Activated CD4-positive, alpha-beta memory T cell treated with anti-CD3 and anti-CD28 coated beads for 36 hours (primary cell): ENCODE measurements at regions of chr6 and their contacts with region 1.

Region 1: DNA sequence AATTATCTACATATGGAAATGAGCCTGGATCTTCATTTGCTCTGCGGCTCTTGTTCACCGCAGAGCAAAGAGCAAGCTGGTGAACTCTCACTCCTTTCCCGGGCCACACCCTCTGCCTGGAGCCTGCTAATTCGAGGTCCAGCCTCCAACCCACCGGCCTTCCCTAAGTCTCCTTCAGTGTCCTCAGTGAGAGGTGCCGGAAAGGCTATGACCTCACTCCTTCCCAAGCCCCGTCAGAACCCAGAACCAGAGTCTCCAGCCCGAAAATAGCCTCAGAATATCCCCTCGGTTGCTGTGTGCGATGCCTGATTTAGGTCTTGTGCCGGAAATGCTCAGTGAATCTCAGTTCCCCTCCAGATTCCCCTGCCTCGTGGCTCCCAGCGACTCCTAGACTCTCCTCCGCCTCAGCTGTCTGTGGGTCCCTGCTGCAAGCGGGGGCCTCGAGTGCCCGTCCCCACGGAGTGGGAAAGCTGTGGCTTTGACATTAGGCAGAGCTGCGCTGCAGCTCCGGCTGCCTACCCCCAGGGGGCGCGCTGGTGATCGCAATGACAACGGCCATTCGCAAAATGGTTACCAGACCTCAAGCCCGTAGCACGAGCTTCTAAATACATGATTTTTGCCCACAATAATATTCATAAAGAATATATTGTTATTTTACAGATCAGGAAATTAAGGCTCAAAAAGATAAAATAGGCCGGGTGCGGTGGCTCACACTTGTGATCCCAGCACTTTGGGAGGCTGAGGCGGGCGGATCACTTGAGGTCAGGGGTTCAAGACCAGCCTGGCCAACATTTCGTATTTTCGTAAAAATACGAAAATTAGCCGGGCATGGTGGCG is 4.1 kb upstream of the BNIP5 start:
- DNase-seq: peak; percentile 80
- H3K4me3 Mint-ChIP-seq: no peak overlapping the region
- H3K27ac Mint-ChIP-seq: no peak overlapping the region
- H3K4me1 Mint-ChIP-seq: peaks cover 13% of the 10 kb centered on the region
- H3K27me3 Mint-ChIP-seq: peaks cover 11% of the 10 kb centered on the region

Region 2: DNA sequence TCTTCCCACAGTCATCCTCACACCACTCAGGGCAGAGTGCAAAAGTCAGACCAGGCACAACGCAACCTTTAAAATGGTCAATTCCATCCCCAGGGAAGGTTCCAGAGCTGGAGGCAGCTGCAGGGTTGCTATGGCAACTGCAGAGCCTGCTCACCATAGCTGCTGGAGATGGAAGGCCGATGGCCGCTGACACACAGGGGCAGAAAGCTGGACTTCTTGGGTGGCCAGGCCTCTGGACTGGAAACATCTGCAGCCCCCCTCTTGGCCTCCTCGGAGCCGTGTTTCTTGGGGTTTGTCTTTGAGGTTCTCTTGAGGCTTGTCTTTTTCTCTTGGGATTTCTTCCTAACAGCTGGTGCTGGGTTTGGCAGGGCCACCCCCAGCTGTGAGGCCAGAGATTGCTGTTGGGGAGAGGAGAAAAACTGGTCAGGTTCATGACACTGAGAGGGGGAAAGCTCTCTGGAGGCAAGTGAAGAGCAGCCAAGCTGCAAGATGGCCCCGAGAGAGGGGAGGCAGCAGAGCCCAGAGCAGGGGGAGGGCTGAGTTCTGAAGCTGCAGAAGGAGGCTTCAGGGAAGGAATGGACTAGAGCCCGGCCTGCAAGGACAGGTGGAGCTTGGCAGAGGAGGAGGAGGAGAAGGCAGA is 14.4 kb before region 1 on chr6:
- CTCF ChIA-PET with region 1: interaction called, 32 read pairs
- POLR2A ChIA-PET with region 1: no interaction called
- intact Hi-C with region 1: no loop called
- DNase-seq: no peak
- H3K4me3 Mint-ChIP-seq: no peak overlapping the region
- H3K27ac Mint-ChIP-seq: no peak overlapping the region
- H3K4me1 Mint-ChIP-seq: no peaks in the 10 kb centered on the region
- H3K27me3 Mint-ChIP-seq: no peaks in the 10 kb centered on the region

Region 3: DNA sequence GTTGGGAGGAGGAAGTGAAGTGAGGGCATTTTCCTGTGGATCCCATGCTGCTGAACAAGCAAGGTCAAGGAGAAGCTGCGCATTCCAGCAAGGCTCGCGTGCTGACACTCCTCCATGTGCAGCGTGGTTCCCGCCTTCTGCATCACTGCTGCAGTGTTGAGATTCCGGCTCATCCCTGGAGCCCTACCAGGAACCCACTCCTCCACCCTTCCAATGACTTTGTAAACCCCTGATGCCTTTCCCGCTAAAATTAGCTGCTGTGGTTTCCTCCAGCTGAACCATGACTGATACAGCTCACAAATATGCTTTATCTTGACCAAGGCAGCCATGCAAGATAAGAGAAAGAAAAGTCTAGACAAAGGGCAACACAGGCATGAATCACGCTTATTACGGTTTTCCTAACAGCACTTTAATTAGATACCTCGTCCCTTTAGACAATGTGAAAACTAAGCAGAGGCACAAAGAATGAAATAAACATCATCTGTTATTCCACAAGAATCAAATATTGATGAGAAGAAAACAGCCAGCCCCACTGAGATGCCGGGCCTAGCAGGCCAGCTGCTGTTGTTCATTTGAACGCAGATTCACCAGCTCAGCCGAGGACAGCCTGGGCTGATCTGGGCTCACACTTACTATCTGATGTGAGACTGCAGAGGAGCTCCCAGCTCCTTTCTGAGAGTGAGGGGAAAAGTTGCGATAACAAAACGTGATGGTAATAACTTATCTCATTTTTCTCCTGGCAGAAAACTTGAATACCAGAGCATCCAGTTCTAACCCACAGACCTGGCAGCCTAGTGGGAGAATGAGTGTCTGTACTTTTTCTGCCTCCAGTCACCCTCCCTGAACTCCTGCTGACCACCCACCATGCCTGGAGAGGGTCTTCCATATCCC is 10.1 kb after region 1 on chr6:
- CTCF ChIA-PET with region 1: interaction called, 74 read pairs
- POLR2A ChIA-PET with region 1: interaction called, 3 read pairs
- intact Hi-C with region 1: no loop called
- DNase-seq: no peak
- H3K4me3 Mint-ChIP-seq: no peak overlapping the region
- H3K27ac Mint-ChIP-seq: no peak overlapping the region
- H3K4me1 Mint-ChIP-seq: peaks cover 15% of the 10 kb centered on the region
- H3K27me3 Mint-ChIP-seq: peaks cover 13% of the 10 kb centered on the region

Region 4: GRCh38 chr6:36360241-36361054 is 19.6 kb after region 1 on chr6:
- CTCF ChIA-PET with region 1: interaction called, 103 read pairs
- POLR2A ChIA-PET with region 1: interaction called, 3 read pairs
- intact Hi-C with region 1: loop called (anchors 1 kb)
- DNase-seq: peak; percentile 79
- H3K4me3 Mint-ChIP-seq: no peak overlapping the region
- H3K27ac Mint-ChIP-seq: no peak overlapping the region
- H3K4me1 Mint-ChIP-seq: peaks cover 24% of the 10 kb centered on the region
- H3K27me3 Mint-ChIP-seq: peaks cover 3% of the 10 kb centered on the region

Region 5: DNA sequence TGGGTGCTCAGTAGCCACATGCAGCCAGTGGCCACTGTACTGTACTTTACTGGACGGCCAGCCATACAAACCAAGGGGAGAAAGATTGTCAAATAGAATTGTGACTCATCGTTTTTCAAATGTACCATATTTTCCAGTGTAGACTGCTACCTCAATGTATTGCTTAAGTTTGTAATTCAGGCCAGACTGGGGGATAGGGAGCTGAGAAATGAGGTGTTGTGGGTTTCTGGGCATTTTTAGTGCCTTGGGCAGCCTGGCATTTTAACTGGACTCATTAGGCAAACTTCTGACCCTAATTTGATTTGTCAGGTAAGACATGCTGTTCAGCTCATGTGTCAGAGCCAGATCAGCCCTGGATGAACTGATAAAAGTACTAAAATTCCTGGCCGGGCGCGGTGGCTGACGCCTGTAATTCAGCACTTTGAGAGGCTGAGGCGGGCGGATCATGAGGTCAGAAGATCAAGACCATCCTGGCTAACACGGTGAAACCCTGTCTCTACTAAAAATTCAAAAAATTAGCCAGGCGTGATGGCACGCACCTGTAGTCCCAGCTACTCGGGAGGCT is 87.0 kb after region 1 on chr6:
- CTCF ChIA-PET with region 1: no interaction called
- POLR2A ChIA-PET with region 1: no interaction called
- intact Hi-C with region 1: no loop called
- DNase-seq: no peak
- H3K4me3 Mint-ChIP-seq: no peak overlapping the region
- H3K27ac Mint-ChIP-seq: no peak overlapping the region
- H3K4me1 Mint-ChIP-seq: peaks cover 18% of the 10 kb centered on the region
- H3K27me3 Mint-ChIP-seq: no peaks in the 10 kb centered on the region